ENCODE measurements at regions of chr17 and their contacts with region 1.

Region 1: DNA sequence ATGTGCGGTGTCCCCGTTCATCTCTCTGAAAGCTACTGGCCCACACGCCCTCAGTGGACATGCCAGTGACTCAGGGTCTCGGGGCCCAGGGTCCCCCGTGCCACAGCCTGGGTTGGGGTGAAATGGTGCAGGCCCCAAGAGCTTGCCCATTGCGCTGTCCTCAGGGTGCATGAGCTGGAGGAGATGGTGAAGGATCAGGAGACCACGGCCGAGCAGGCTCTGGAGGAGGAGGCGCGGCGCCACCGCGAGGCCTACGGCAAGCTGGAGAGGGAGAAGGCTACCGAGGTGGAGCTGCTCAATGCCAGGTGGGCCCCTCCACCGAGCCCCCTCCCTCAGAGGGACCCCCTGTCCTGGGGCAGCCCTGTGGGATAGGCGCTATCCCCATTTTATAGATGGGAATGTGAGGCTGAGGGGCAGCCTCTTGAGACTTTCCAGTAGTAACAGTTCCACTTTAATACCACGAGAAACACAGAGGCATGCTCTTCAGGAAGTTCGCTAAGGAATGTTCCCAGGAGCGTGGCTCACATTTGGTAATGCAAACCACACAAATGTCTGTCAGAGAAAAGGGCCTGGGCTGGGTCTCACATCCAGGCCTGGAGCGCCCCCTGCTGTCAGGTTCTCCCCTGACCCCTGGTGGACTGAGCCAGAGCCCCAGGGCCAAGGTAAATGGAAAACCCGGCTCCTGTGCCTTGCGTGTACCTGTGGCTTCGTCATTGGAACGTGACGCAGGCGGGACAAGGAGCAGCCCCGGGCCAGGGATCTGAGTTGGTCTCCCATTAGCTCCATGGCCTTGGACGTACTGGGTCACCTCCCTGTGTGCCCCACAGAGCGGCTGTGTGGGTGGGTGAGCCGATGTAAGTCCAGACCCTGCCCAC is 133.7 kb downstream of the RAB11FIP4 start:
- DNase-seq: peak in 1 of 2 donors; percentile 94
- H3K4me3 ChIP-seq: no peak overlapping the region
- H3K27ac ChIP-seq: no peak overlapping the region
- H3K4me1 ChIP-seq: peaks cover 0 to 8% of the 10 kb centered on the region in 2 donors
- H3K27me3 ChIP-seq: no peaks in the 10 kb centered on the region
- CTCF ChIP-seq: peak; percentile 84 to 92 (median 91)

Region 2: DNA sequence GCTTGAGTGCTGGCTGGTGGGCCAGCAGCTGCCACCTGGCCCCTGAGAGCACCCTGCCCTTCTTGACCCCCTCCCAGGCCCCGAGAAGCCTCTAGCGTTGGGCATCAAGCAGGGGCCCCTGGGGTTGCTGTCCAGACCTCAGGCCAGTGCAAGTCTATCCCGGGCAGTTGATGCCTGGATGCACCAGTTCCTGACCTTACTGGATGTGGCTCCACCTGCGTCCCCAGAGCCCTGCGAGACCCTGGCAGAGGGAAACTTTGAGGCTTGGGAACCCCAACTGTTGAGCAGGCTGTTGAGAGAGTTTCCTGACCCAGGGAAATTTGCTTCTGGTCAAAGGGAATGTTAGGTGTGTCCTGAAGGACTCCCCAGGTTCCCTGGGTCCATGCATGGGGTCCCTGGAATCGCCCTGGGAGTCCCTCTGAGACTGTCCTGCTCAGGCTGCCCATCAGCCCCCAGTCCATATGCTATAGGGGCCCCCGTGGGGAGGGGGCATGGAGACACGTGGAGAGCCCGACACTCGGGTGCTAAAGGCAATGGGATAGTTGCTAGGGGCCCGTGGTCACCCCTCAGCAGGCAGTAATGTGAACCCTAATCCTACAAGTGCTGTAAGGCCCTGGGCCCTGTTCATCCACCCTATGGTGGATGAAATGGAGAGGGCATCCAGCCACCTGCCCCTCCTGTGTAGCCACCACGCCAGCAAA is 87.3 kb before region 1 on chr17:
- intact Hi-C with region 1: loop called (anchors 1 kb)
- DNase-seq: no peak
- H3K4me3 ChIP-seq: no peak overlapping the region
- H3K27ac ChIP-seq: no peak overlapping the region
- H3K4me1 ChIP-seq: no peaks in the 10 kb centered on the region
- H3K27me3 ChIP-seq: no peaks in the 10 kb centered on the region
- CTCF ChIP-seq: no peak

Region 3: GRCh38 chr17:31696184-31696602 is 171.0 kb after region 1 on chr17:
- intact Hi-C with region 1: no loop called
- DNase-seq: peak; percentile 58 to 96
- H3K4me3 ChIP-seq: no peak overlapping the region
- H3K27ac ChIP-seq: peak overlapping the region; percentile 71 to 73
- H3K4me1 ChIP-seq: peaks cover 6 to 45% of the 10 kb centered on the region in 2 donors
- H3K27me3 ChIP-seq: no peaks in the 10 kb centered on the region
- CTCF ChIP-seq: peak in 1 of 3 experiments; percentile 18

Region 4: GRCh38 chr17:31900877-31901276 is 375.7 kb after region 1 on chr17:
- intact Hi-C with region 1: loop called (anchors 2 kb)
- DNase-seq: no peak
- H3K4me3 ChIP-seq: peak overlapping the region; percentile 73 to 90
- H3K27ac ChIP-seq: peak overlapping the region; percentile 56 to 72
- H3K4me1 ChIP-seq: peaks cover 4 to 9% of the 10 kb centered on the region in 2 donors
- H3K27me3 ChIP-seq: no peaks in the 10 kb centered on the region
- CTCF ChIP-seq: no peak